ENCODE measurements at regions of chr17 and their contacts with region 1.

Region 1: GRCh38 chr17:74424657-74425056 is 7.2 kb upstream of the GPRC5C start:
- DNase-seq: peak in 4 of 5 donors; percentile 62 to 85 (median 74)
- ATAC-seq: peak; percentile 81 to 96 (median 90)
- H3K4me3 ChIP-seq: peak overlapping the region in 7 of 12 donors; percentile 24 to 43 (median 31)
- H3K27ac ChIP-seq: peak overlapping the region in 11 of 12 donors; percentile 32 to 83 (median 67)
- H3K4me1 ChIP-seq: peaks cover 0 to 39% (median 20%) of the 10 kb centered on the region in 12 donors
- H3K27me3 ChIP-seq: peaks cover 0 to 2% (median 0%) of the 10 kb centered on the region in 9 donors
- CTCF ChIP-seq: no peak
- POLR2A ChIP-seq: no peak

Region 2: GRCh38 chr17:74386386-74386785 is 38.3 kb before region 1 on chr17:
- intact Hi-C with region 1: loop called in 4 of 10 experiments (anchors 5 kb)
- DNase-seq: peak; percentile 73 to 86 (median 79)
- ATAC-seq: peak; percentile 70 to 94 (median 84)
- H3K4me3 ChIP-seq: no peak overlapping the region
- H3K27ac ChIP-seq: peak overlapping the region in 11 of 12 donors; percentile 36 to 85 (median 70)
- H3K4me1 ChIP-seq: peaks cover 0 to 14% (median 13%) of the 10 kb centered on the region in 12 donors
- H3K27me3 ChIP-seq: no peaks in the 10 kb centered on the region
- CTCF ChIP-seq: no peak
- POLR2A ChIP-seq: no peak